Activated CD8-positive, alpha-beta T cell treated with anti-CD3 and anti-CD28 coated beads for 36 hours (primary cell): ENCODE measurements at regions of chr11 and their contacts with region 1.

Region 1: GRCh38 chr11:86608251-86608799 is 64.1 kb downstream of the ME3 start:
- DNase-seq: peak; percentile 54
- ATAC-seq: peak; percentile 88
- H3K4me3 Mint-ChIP-seq: no peak overlapping the region
- H3K27ac Mint-ChIP-seq: no peak overlapping the region
- H3K4me1 Mint-ChIP-seq: peaks cover 4% of the 10 kb centered on the region
- H3K27me3 Mint-ChIP-seq: peaks cover 4% of the 10 kb centered on the region
- CTCF ChIP-seq: peak; percentile 96

Region 2: GRCh38 chr11:86456052-86456939 is 152.0 kb before region 1 on chr11:
- CTCF ChIA-PET with region 1: interaction called, 32 read pairs
- POLR2A ChIA-PET with region 1: no interaction called
- intact Hi-C with region 1: loop called (anchors 5 kb)
- DNase-seq: peak; percentile 92
- ATAC-seq: peak; percentile 93
- H3K4me3 Mint-ChIP-seq: no peak overlapping the region
- H3K27ac Mint-ChIP-seq: no peak overlapping the region
- H3K4me1 Mint-ChIP-seq: peaks cover 18% of the 10 kb centered on the region
- H3K27me3 Mint-ChIP-seq: no peaks in the 10 kb centered on the region
- CTCF ChIP-seq: peak; percentile 94

Region 3: DNA sequence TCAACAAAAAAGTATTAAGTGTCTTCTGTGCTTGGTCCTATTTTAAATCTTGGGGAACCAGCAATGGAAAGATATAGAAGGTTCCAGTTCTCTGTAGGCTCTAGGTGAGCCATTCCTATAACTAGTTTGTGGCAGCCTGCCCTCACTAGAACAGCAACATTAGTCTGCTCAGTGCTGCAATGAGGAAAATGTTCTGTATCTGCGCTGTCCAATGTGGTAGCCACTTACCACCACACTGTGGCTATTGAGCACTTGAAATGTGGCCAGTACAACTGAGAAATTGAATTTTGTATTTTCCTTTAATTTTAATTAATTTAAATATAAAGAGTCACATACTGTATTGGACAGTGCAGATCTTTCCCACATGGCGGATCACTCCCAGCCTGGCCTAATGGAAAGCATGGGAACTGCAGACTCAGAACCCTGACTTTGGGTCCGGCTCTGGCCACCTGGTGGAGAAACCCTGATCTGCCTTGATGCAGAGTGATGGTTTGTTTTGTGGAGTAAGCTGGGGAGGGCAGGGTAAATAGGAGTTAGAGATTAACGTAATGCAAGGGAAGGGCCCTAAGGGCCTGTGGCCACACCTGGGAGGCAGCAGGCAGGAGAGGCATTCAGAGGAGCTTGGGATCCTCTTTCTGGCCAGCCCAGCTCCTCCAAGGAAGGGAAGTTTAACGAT is 36.9 kb before region 1 on chr11:
- CTCF ChIA-PET with region 1: interaction called, 17 read pairs
- POLR2A ChIA-PET with region 1: no interaction called
- intact Hi-C with region 1: no loop called
- DNase-seq: peak; percentile 6
- ATAC-seq: no peak
- H3K4me3 Mint-ChIP-seq: no peak overlapping the region
- H3K27ac Mint-ChIP-seq: no peak overlapping the region
- H3K4me1 Mint-ChIP-seq: no peaks in the 10 kb centered on the region
- H3K27me3 Mint-ChIP-seq: peaks cover 8% of the 10 kb centered on the region
- CTCF ChIP-seq: no peak

Region 4: DNA sequence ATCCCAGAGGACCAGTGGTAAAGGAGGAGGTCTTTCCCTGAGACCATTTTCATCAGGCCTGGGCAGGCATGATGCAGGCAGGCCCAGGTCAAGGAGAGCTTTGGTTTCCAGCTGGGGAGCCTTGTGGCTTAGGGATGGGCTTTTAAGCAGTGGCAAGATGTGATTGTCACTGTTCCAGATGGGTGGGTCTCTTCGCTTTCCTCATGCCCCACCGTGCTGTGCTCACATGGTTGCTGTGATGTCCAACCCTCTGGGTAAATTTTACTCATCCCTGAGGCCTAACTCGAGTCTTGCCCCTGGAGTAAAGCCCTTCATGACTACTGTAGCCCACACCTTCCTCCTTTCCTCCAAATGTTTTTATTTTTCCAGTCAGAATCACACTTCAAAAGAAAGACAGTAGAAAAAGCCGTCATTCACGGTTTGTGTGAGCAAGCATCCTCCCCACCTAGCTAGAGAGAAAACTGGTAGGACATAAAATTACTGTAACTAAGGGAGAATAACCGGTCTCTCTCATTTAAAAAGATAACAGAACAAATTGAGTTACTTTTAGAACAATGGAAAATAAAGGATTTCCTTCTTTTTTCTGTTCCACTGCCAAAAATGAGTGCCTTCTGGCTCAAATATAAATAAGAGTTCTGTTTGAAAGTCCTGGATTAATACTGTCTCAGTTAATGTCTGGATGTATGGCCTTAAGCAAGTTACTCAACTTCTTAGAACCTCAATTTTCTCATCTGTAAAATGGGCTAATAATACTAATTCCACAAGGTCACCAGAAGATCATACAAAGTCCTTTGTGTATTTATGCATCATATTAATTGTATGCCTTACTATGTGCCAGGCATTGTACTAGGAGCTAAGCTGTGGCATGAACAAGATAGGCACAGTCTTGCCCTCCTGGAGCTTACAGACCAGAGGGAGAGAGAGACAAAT is 20.8 kb before region 1 on chr11:
- CTCF ChIA-PET with region 1: interaction called, 17 read pairs
- POLR2A ChIA-PET with region 1: no interaction called
- intact Hi-C with region 1: no loop called
- DNase-seq: no peak
- ATAC-seq: no peak
- H3K4me3 Mint-ChIP-seq: no peak overlapping the region
- H3K27ac Mint-ChIP-seq: no peak overlapping the region
- H3K4me1 Mint-ChIP-seq: peaks cover 12% of the 10 kb centered on the region
- H3K27me3 Mint-ChIP-seq: no peaks in the 10 kb centered on the region
- CTCF ChIP-seq: no peak

Region 5: DNA sequence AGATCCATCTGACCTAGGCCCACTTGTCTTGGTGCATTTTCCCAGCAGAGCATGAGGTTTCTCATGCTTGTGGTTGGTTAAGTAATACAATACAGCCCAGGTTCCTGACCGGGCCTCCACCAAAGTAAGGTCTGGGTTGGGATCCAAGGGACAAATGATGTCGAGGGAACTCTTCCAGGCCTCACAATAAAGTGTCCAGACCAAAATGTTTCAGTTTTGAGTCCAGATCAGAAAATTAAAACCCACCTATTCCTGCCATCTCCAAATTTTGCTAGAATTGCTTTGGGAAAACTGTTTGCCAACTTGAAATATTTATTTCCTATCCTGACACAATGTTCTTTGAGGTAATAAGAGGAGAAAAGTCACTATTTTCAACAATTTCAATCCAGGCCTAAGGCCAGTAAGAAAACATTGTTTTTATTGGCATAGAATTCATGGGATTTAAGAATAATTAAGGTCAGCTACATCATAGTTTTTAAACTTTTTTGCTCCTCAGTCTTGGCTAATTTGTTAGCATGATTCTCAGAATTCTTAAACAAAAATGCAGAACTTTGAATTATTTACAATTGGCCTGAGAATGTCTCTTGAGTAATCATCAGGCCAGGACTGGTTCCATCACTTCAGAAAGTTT is 12.7 kb after region 1 on chr11:
- CTCF ChIA-PET with region 1: interaction called, 21 read pairs
- POLR2A ChIA-PET with region 1: no interaction called
- intact Hi-C with region 1: no loop called
- DNase-seq: no peak
- ATAC-seq: no peak
- H3K4me3 Mint-ChIP-seq: no peak overlapping the region
- H3K27ac Mint-ChIP-seq: no peak overlapping the region
- H3K4me1 Mint-ChIP-seq: peaks cover 2% of the 10 kb centered on the region
- H3K27me3 Mint-ChIP-seq: peaks cover 7% of the 10 kb centered on the region
- CTCF ChIP-seq: no peak

Region 6: DNA sequence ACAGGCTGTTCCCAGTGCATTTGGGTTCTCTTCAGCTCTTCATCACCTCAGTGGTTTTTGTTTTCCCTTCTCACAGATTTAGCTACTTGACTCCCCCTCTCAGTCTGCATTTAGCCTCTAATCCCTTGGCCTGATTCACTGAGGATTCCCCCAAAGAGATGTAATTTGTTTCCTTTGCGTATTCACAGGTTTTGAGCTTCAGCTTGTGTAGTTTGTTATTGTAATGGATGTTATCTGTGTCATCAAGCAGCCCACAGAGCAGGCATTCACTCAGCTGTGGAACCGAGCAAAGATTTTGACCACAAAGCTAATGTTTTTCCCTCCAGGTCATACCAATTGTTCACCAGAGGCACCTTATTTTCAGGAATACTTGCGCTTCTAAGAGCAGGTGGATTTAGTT is 70.5 kb after region 1 on chr11:
- CTCF ChIA-PET with region 1: interaction called, 11 read pairs
- POLR2A ChIA-PET with region 1: no interaction called
- intact Hi-C with region 1: no loop called
- DNase-seq: no peak
- ATAC-seq: no peak
- H3K4me3 Mint-ChIP-seq: no peak overlapping the region
- H3K27ac Mint-ChIP-seq: no peak overlapping the region
- H3K4me1 Mint-ChIP-seq: no peaks in the 10 kb centered on the region
- H3K27me3 Mint-ChIP-seq: peaks cover 1% of the 10 kb centered on the region
- CTCF ChIP-seq: no peak